ENCODE measurements at regions of chr2 and their contacts with region 1.

Region 1: GRCh38 chr2:230824406-230824978 is 40.2 kb upstream of the ITM2C start:
- DNase-seq: peak; percentile 38
- H3K4me3 Mint-ChIP-seq: no peak overlapping the region
- H3K27ac Mint-ChIP-seq: no peak overlapping the region
- H3K4me1 Mint-ChIP-seq: peaks cover 16% of the 10 kb centered on the region
- H3K27me3 Mint-ChIP-seq: peaks cover 29% of the 10 kb centered on the region

Region 2: DNA sequence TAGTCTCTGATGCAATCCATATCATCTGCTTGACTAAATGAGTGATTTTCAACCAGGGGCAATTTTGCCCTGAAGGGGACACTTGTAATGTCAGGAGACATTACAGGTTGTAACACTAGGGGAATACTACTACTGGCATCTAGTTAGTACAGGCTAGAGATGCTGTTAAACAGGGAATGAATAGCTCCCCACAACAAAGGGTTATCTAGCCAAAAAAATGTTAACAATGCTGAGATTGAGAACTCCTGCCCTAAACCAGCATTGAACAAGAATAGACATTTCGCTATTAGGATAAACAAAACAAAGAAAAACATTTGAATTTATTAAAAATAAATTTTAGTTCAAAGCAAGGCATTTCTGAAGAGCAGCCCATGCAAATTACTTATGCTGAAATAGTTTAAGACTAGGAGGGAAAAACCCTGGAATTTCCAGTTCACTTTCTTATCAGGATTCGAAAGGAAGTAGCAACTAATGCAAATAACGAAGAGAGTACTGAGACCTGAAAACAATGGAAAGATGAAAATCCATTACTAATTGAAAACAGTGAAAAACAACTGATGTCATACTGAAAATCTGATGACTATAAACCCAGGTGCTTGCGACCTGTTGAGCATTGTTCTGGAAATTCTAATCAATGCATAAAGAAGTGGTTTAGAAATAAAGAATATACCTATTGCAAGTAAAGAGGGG is 58.7 kb before region 1 on chr2:
- intact Hi-C with region 1: no loop called
- DNase-seq: no peak
- H3K4me3 Mint-ChIP-seq: no peak overlapping the region
- H3K27ac Mint-ChIP-seq: peak overlapping the region; percentile 25
- H3K4me1 Mint-ChIP-seq: peaks cover 56% of the 10 kb centered on the region
- H3K27me3 Mint-ChIP-seq: no peaks in the 10 kb centered on the region

Region 3: DNA sequence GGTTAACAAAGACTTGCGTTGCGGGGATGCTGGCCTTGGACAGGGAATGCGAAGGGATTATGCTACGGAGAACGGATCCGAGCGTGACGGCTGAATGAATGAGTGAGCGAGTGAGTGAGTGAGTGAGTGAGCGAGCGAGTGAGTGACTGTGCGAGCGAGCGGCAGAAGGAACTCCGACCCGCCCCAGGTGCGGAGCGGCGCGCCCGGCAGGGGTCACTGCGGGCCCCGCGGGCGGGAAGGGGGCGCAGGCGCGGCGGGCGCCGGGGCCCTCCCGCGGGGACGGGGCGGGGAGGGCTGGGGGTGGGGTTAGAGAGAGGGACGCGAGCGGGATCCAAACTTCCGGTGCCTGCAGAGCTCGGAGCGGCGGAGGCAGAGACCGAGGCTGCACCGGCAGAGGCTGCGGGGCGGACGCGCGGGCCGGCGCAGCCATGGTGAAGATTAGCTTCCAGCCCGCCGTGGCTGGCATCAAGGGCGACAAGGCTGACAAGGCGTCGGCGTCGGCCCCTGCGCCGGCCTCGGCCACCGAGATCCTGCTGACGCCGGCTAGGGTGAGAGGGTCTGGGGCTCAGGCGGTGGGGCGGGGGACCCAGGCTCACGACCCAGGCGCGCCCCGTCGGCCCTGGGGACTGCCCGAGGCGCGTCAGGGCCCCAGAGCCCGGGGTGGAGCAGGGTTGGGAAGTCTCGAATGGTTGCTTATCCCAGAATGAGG is 40.3 kb after region 1 on chr2 and contains the start of gene ITM2C:
- intact Hi-C with region 1: loop called (anchors 5 kb)
- DNase-seq: peak; percentile 65
- H3K4me3 Mint-ChIP-seq: peak within 1 kb of the TSS; percentile 86
- H3K27ac Mint-ChIP-seq: no peak within 1 kb of the TSS
- H3K4me1 Mint-ChIP-seq: peaks cover 22% of the 10 kb centered on the region
- H3K27me3 Mint-ChIP-seq: peaks cover 47% of the 10 kb centered on the region
- total RNA-seq, gene ITM2C: 13.3 and 15.8 TPM in 2 replicates

Region 4: DNA sequence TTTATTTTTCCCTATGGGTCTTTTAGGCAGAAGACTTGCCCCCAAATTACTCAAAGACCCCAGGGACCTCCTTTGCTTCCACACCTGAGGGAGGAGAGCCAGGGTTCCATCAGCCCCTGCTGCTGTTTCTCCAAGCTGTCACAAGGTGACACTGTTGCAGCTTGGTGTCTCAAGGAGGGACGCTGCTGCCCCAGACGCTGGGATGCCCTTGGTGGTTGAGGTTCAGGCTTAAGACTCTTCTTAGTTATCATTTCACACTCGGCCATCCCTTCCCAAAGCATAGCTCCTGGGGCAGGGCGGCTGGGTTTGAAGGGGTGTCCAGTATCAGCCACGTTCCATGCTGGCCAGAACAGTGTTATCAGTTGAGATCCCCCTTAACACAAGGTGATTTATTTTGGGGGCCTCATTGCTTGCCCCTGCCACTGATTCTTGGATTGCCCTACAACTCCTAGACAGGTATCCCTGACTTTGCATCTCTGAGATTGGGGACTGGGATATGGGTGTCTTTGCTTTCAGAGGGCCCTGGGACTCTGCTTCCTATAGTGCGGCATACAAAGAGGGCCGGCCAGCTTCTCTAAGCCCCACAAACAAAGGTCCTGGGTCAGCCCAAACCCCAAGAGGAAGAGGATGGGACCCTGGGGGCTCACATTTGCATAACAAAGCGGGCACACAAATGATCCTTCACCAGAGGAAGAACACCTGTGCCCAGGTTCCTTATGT is 77.8 kb after region 1 on chr2:
- intact Hi-C with region 1: loop called (anchors 1 kb)
- DNase-seq: no peak
- H3K4me3 Mint-ChIP-seq: no peak overlapping the region
- H3K27ac Mint-ChIP-seq: no peak overlapping the region
- H3K4me1 Mint-ChIP-seq: peaks cover 33% of the 10 kb centered on the region
- H3K27me3 Mint-ChIP-seq: peaks cover 35% of the 10 kb centered on the region

Region 5: GRCh38 chr2:231056453-231057424 is 232.2 kb after region 1 on chr2 and contains the start of gene PSMD1:
- intact Hi-C with region 1: loop called (anchors 2 kb)
- DNase-seq: peak; percentile 91
- H3K4me3 Mint-ChIP-seq: peak within 1 kb of the TSS; percentile 97
- H3K27ac Mint-ChIP-seq: peak within 1 kb of the TSS; percentile 100
- H3K4me1 Mint-ChIP-seq: peaks cover 48% of the 10 kb centered on the region
- H3K27me3 Mint-ChIP-seq: peaks cover 2% of the 10 kb centered on the region
- total RNA-seq, gene PSMD1: 180 and 194 TPM in 2 replicates

Measured in activated T-helper 2 cell treated with anti-CD3 and anti-CD28 coated beads, Interferon-gamma antibody, Interleukin-2, Interleukin-4, amounts not matched to agents 10 μg/mL and 5 μg/mL and 100 μg/mL, durations not matched to agents 14 hours and 24 hours and 36 hours (primary cell).